Activated B cell treated with CpG ODN at 0.5 μM for 24 hours (primary cell): ENCODE measurements at regions of chr15 and their contacts with region 1.

Region 1: DNA sequence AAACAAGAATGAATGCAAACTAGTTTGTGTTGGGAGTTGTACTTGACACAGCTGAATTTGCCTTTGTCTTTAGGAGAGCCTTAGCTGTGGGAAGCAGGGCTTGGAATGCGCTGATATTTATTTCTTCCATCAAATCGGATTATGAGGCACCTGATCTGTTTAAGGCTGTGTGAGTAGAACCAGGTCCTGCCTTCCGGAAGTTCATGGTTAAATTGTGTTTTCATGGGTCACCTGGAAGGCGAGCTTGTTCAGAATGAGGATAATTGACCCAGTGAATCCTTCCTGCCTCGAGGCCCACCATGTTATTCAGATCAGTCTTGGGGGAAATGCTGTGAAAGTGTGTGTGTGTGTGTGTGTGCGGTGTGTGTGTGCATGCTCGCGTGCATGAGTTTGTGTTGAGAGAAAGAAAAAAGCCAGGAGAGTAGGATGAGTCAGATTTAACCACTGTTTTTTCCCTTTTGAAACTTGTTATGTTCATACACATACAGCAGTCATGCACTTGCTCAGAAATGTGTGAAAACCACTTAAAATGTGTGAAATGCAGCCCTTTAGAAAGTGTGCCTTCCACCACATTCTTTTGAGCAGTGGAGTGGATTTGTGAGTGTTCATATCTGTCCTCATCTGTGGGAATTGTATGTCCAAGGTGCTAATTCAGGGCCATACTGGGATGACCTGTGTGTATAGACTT is 36.7 kb downstream of the SMAD3 start:
- DNase-seq: no peak
- ATAC-seq: peak; percentile 41
- H3K4me3 Mint-ChIP-seq: no peak overlapping the region
- H3K27ac Mint-ChIP-seq: no peak overlapping the region
- H3K4me1 Mint-ChIP-seq: peaks cover 33% of the 10 kb centered on the region
- H3K27me3 Mint-ChIP-seq: no peaks in the 10 kb centered on the region
- CTCF ChIP-seq: no peak

Region 2: GRCh38 chr15:67085818-67086636 is 16.0 kb before region 1 on chr15:
- CTCF ChIA-PET with region 1: interaction called, 70 read pairs
- POLR2A ChIA-PET with region 1: interaction called, 1,703 read pairs
- intact Hi-C with region 1: loop called (anchors 1 kb)
- DNase-seq: no peak
- ATAC-seq: peak; percentile 51
- H3K4me3 Mint-ChIP-seq: peak overlapping the region; percentile 59
- H3K27ac Mint-ChIP-seq: peak overlapping the region; percentile 95
- H3K4me1 Mint-ChIP-seq: peaks cover 100% of the 10 kb centered on the region
- H3K27me3 Mint-ChIP-seq: no peaks in the 10 kb centered on the region
- CTCF ChIP-seq: no peak

Region 3: GRCh38 chr15:67091071-67091979 is 10.7 kb before region 1 on chr15:
- CTCF ChIA-PET with region 1: interaction called, 70 read pairs
- POLR2A ChIA-PET with region 1: interaction called, 1,703 read pairs
- intact Hi-C with region 1: loop called (anchors 1 kb)
- DNase-seq: no peak
- ATAC-seq: peak; percentile 46
- H3K4me3 Mint-ChIP-seq: peak overlapping the region; percentile 74
- H3K27ac Mint-ChIP-seq: peak overlapping the region; percentile 95
- H3K4me1 Mint-ChIP-seq: peaks cover 100% of the 10 kb centered on the region
- H3K27me3 Mint-ChIP-seq: no peaks in the 10 kb centered on the region
- CTCF ChIP-seq: no peak

Region 4: DNA sequence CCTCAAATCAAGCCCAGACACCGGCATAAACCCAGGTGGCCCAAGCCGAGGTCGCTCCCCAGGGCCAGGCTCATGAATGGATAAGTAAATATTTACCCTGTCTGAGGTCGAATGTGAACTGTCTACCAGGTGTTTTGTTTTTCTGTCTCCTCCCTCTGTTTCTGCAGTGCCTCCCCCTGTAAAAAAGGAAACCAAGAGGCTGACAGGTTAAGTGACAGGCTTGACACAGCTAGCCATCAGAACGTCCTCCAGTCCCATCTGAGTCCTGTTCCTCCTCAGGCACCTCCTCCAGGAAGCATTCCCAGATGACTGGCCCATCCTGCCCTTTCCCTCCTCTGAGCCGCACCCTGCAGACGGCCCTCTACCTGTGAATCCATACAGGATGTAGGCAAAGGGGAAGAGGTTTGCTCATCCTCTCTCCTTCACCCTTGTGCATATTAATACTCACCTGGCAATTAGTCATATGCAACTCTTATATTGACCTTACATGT is 25.1 kb after region 1 on chr15:
- CTCF ChIA-PET with region 1: interaction called, 11 read pairs
- POLR2A ChIA-PET with region 1: interaction called, 1,703 read pairs
- intact Hi-C with region 1: no loop called
- DNase-seq: no peak
- ATAC-seq: no peak
- H3K4me3 Mint-ChIP-seq: no peak overlapping the region
- H3K27ac Mint-ChIP-seq: peak overlapping the region; percentile 67
- H3K4me1 Mint-ChIP-seq: peaks cover 89% of the 10 kb centered on the region
- H3K27me3 Mint-ChIP-seq: no peaks in the 10 kb centered on the region
- CTCF ChIP-seq: no peak

Region 5: DNA sequence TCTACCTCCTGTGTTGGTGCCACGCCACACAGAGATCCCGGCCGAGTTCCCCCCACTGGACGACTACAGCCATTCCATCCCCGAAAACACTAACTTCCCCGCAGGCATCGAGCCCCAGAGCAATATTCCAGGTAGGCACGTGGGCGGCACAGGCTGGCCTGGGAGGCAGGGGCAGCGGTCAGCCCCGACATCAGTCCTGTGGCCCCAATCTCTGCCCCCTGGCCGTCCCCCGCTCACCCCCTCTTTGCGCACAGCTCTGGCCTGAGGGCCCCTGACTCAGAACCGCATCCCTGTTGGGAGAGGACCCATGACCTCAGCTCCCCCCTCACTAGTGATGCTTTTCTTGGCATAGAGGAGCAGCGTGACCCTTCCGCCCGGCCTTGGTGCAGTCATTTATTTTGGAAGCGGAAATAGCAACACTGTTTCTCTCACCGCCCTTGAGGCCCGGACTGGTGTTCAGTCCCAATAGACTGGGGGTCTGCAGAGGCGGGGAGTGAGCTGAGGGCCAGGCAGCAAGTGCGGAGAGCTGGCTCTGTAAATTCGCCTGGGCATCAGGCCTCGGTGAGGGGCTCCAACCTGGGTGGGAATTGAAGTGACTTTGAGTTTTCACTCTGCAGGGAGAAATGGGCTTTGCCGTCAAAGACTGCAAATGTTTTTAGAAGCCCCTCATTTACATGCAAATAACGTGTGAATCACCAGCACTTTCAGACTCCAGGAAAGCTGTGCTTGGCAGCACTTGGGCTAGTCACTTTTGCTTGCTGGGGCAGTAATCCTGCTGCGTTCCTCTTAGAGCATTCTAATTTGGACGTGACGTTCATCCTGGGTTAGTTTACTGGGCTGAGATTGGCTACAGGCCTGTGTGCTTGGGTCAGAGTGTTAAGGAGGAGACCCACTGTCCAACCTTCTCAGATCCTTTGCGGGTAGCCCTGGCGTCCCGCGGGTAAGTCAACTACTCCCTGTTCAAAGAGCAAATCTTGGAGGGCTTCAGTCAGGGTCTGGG is 63.5 kb after region 1 on chr15:
- CTCF ChIA-PET with region 1: no interaction called
- POLR2A ChIA-PET with region 1: no interaction called
- intact Hi-C with region 1: no loop called
- DNase-seq: no peak
- ATAC-seq: no peak
- H3K4me3 Mint-ChIP-seq: no peak overlapping the region
- H3K27ac Mint-ChIP-seq: no peak overlapping the region
- H3K4me1 Mint-ChIP-seq: peaks cover 42% of the 10 kb centered on the region
- H3K27me3 Mint-ChIP-seq: no peaks in the 10 kb centered on the region
- CTCF ChIP-seq: no peak